ENCODE measurements at regions of chr14 and their contacts with region 1.

Region 1: GRCh38 chr14:49971156-49972130 is 78.6 kb downstream of the ARF6 start:
- DNase-seq: peak; percentile 77
- ATAC-seq: peak; percentile 66
- H3K4me3 Mint-ChIP-seq: peak overlapping the region; percentile 75
- H3K27ac Mint-ChIP-seq: peak overlapping the region; percentile 98
- H3K4me1 Mint-ChIP-seq: peaks cover 67% of the 10 kb centered on the region
- H3K27me3 Mint-ChIP-seq: no peaks in the 10 kb centered on the region

Region 2: DNA sequence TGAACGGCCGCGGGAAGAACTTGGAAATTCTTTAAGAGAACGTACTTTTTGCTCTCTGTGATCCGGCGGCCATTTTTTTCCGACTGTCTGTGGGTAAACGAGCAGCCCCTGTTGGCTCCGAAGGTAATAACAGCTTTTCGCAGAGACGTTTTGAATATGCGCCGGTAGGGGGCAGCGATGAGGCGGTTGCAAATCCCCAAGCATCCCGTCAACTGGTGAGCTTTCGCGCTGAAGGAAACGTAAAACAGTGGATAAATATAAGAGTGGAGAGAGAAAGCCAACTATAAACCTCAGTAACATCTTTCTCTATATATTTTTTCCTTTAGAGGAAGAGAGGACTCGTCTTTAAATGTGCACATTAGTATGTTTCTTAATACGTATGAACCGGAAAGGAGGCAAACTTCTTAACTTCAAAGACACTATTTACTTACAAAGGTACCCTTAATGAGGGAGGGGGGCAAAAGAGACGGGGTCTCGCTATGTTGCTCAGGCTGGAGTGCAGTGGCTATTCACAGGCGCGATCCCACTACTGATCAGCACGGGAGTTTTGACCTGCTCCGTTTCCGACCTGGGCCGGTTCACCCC is 109.3 kb before region 1 on chr14:
- CTCF ChIA-PET with region 1: interaction called, 16 read pairs
- POLR2A ChIA-PET with region 1: interaction called, 4 read pairs
- intact Hi-C with region 1: loop called in 1 of 2 experiments (anchors 2 kb)
- DNase-seq: peak; percentile 92
- ATAC-seq: peak; percentile 13
- H3K4me3 Mint-ChIP-seq: no peak overlapping the region
- H3K27ac Mint-ChIP-seq: no peak overlapping the region
- H3K4me1 Mint-ChIP-seq: peaks cover 20% of the 10 kb centered on the region
- H3K27me3 Mint-ChIP-seq: no peaks in the 10 kb centered on the region

Region 3: GRCh38 chr14:49908432-49908781 is 63.0 kb before region 1 on chr14:
- CTCF ChIA-PET with region 1: interaction called, 5 read pairs
- POLR2A ChIA-PET with region 1: interaction called, 4 read pairs
- intact Hi-C with region 1: loop called in 1 of 2 experiments (anchors 2 kb)
- DNase-seq: no peak
- ATAC-seq: no peak
- H3K4me3 Mint-ChIP-seq: no peak overlapping the region
- H3K27ac Mint-ChIP-seq: no peak overlapping the region
- H3K4me1 Mint-ChIP-seq: peaks cover 46% of the 10 kb centered on the region
- H3K27me3 Mint-ChIP-seq: no peaks in the 10 kb centered on the region

Region 4: GRCh38 chr14:49959822-49960408 is 11.5 kb before region 1 on chr14:
- CTCF ChIA-PET with region 1: interaction called, 12 read pairs
- POLR2A ChIA-PET with region 1: no interaction called
- intact Hi-C with region 1: no loop called
- DNase-seq: peak; percentile 53
- ATAC-seq: peak; percentile 37
- H3K4me3 Mint-ChIP-seq: no peak overlapping the region
- H3K27ac Mint-ChIP-seq: peak overlapping the region; percentile 42
- H3K4me1 Mint-ChIP-seq: peaks cover 42% of the 10 kb centered on the region
- H3K27me3 Mint-ChIP-seq: no peaks in the 10 kb centered on the region

Region 5: DNA sequence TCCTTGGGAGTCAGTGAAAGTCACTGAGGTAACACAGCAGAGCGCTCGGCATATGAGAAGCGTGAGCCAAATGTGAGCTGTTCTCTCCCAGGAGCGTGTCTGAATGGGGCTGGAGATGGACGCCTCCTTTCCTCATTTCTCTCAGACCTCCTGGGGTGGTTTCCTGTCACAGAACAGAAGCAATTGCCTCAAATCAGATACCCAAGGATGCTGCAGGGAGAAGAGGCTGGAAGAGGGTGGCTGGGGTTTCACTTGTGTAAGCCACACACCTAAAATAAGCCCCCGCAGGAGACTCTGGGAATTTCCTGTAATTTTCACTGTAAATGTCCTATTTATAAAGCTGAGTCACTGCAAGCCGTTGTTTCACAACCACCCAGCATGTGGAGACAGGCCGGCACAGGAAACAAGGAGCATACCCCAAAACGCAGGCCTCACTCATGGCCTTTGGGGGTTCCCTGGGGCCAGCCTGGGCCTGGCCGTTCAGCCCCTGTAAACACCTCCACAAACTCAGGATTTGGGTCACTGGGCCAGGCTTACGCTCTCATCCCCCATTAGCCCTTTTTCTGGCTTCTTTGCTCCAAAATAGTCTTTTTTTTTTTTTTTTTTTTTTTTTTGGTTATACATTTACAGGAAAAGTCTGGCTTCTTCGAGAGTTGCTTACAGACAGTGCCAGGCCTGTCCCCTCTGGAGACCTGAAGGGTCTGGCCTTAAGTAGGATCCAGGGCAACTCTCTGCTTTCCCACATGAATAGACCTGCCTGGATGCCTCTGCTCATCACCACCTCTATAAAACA is 89.6 kb after region 1 on chr14:
- CTCF ChIA-PET with region 1: interaction called, 3 read pairs
- POLR2A ChIA-PET with region 1: interaction called, 5 read pairs
- intact Hi-C with region 1: loop called in 1 of 2 experiments (anchors 2 kb)
- DNase-seq: peak; percentile 65
- ATAC-seq: peak; percentile 6
- H3K4me3 Mint-ChIP-seq: peak overlapping the region; percentile 90
- H3K27ac Mint-ChIP-seq: peak overlapping the region; percentile 100
- H3K4me1 Mint-ChIP-seq: peaks cover 84% of the 10 kb centered on the region
- H3K27me3 Mint-ChIP-seq: no peaks in the 10 kb centered on the region

Region 6: DNA sequence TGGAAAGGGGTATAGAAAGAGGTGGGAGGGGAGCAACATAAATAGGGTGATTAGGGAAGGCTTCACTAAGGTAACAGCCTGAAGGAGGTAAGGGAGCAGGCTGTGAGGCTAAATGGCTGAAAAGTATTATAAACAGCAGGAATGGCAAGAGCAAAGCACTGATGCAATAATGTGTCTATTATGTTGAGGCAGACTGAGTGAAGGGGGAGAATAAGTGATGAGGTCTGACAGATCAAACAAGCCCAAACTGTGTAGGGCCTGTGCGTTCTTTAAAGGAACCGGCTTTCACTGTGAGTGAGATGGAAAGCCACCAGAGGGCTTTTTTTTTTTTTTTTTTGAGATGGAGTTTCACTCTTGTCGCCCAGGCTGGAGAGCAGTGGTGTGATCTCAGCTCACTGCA is 151.6 kb after region 1 on chr14:
- CTCF ChIA-PET with region 1: no interaction called
- POLR2A ChIA-PET with region 1: no interaction called
- intact Hi-C with region 1: no loop called
- DNase-seq: no peak
- ATAC-seq: peak; percentile 78
- H3K4me3 Mint-ChIP-seq: no peak overlapping the region
- H3K27ac Mint-ChIP-seq: no peak overlapping the region
- H3K4me1 Mint-ChIP-seq: peaks cover 3% of the 10 kb centered on the region
- H3K27me3 Mint-ChIP-seq: no peaks in the 10 kb centered on the region